ENCODE measurements at regions of chr20 and their contacts with region 1.

Region 1: DNA sequence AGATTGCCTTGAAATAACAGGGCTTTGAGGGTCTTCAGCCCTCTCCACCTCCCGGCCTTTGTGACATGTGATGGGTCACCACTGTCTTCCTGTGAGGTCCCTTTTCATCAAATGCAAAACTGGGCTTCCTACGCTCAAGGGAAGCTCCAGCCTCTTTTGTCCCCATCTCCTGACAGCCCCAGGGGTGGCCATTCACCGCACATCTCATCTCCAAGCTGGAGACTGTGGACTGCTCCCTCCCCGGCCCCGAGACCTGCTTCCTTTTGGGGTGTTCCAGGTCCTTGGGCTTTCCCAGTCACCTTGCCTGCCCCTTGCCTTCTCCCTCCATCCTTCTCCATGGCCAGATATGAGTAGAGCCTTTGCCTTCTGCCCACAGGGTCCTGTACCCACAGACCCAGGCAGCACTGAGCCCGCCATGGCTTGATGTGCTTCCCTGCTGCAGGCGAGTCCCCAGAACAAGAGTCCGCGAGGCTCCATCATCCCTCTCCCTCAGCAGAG is 21.8 kb downstream of the PYGB start:
- DNase-seq: no peak
- ATAC-seq: no peak
- H3K4me3 ChIP-seq: no peak overlapping the region
- H3K27ac ChIP-seq: no peak overlapping the region
- H3K4me1 ChIP-seq: no peaks in the 10 kb centered on the region
- H3K27me3 ChIP-seq: no peaks in the 10 kb centered on the region
- CTCF ChIP-seq: no peak
- POLR2A ChIP-seq: no peak
- RAD21 ChIP-seq: no peak

Region 2: DNA sequence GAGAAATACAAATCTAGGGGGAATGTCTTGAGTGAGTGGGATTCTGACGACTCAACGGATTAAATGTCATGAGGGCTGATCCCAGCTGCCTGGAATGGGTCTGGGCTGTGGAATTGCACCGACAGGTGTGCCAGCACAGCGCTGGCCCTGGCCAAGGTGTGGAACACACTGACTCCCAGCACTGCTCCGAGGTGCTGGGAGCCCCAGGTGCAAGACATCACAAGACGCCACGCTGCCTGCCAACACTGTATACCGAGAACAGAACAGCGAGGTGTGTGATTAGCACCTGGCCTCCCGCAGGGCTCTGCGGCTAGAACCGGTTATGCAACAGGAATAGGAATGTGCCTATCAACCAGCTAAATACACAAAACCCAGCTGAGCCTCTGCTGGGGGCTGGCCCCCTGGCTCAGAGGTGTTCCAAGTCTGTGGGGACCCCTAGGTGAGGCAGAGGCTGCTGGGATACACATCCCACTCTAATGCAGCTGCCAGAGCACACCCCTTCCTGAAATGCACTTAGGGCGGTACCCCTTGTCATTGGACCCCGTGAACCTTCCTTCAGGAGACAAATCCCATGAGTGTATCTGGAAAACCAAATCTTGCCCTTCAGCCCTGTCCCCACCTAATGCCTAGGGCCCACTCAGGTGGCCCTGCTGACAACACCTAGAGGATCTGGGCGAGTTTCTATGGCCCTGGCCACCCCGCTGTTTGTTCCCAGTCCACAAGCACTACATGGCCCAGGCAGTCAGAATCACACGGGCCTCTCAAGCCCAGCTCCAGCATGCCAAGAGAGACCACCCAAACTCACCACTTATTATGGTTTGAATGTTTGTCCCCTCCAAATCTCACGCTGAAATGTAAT is 252.2 kb before region 1 on chr20:
- CTCF ChIA-PET with region 1: no interaction called
- POLR2A ChIA-PET with region 1: no interaction called
- dilution Hi-C with region 1: no loop called
- in situ Hi-C with region 1: no loop called
- intact Hi-C with region 1: no loop called
- DNase-seq: no peak
- ATAC-seq: no peak
- H3K4me3 ChIP-seq: no peak overlapping the region
- H3K27ac ChIP-seq: no peak overlapping the region
- H3K4me1 ChIP-seq: peaks cover 2% of the 10 kb centered on the region; the same call in 1 of the 2 replicates
- H3K27me3 ChIP-seq: peaks cover 3% of the 10 kb centered on the region; the same call in 1 of the 2 replicates
- CTCF ChIP-seq: no peak
- POLR2A ChIP-seq: no peak
- RAD21 ChIP-seq: no peak

Region 3: GRCh38 chr20:25216199-25216945 is 53.3 kb before region 1 on chr20:
- CTCF ChIA-PET with region 1: no interaction called
- POLR2A ChIA-PET with region 1: no interaction called
- dilution Hi-C with region 1: no loop called
- in situ Hi-C with region 1: loop called (anchors 10 kb)
- intact Hi-C with region 1: no loop called
- DNase-seq: no peak
- ATAC-seq: no peak
- H3K4me3 ChIP-seq: no peak overlapping the region
- H3K27ac ChIP-seq: no peak overlapping the region
- H3K4me1 ChIP-seq: no peaks in the 10 kb centered on the region
- H3K27me3 ChIP-seq: no peaks in the 10 kb centered on the region
- CTCF ChIP-seq: no peak
- POLR2A ChIP-seq: no peak
- RAD21 ChIP-seq: no peak

Region 4: GRCh38 chr20:25514747-25515340 is 245.2 kb after region 1 on chr20:
- CTCF ChIA-PET with region 1: no interaction called
- POLR2A ChIA-PET with region 1: no interaction called
- dilution Hi-C with region 1: no loop called
- in situ Hi-C with region 1: no loop called
- intact Hi-C with region 1: no loop called
- DNase-seq: no peak
- ATAC-seq: no peak
- H3K4me3 ChIP-seq: no peak overlapping the region
- H3K27ac ChIP-seq: no peak overlapping the region
- H3K4me1 ChIP-seq: no peaks in the 10 kb centered on the region
- H3K27me3 ChIP-seq: no peaks in the 10 kb centered on the region
- CTCF ChIP-seq: no peak
- POLR2A ChIP-seq: no peak
- RAD21 ChIP-seq: no peak